Head of caudate nucleus (tissue), 42 donors: ENCODE measurements at regions of chr20 and their contacts with region 1.

Region 1: GRCh38 chr20:11274141-11274594 is 600.4 kb upstream of the JAG1 start:
- DNase-seq: peak in 33 of 42 donors; percentile 13 to 87 (median 55)

Region 2: DNA sequence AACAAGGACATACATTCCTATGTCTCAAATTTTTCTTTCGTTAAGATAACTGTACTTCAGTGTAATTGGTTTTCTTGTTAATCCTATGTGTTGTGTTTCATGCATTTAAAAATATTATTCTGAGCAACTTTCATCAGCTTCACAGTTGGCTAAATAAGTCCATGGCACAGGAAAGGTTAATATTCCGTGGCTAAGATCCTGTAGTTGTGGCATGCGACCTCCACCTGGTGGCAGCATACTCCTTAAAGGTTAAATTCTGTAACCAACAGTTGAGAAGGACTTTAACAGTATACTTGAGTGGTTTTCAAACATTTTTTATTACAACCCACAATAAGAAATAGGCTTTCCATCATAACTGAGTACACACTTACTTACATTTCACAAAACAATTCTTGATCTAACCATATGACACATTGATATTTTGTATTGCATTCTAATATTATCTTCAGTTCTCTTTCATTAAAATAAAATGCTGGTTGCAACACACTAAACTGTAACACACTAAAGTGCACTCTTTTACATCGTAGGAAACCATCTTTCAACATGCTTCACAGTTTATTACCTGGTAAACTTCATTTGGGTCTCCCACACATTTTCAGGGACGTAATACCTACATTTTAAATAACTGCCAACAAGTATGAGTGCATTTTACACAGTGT is 720.7 kb before region 1 on chr20:
- intact Hi-C with region 1: loop called (anchors 5 kb)
- DNase-seq: peak; percentile 20 to 85 (median 64)

Region 3: DNA sequence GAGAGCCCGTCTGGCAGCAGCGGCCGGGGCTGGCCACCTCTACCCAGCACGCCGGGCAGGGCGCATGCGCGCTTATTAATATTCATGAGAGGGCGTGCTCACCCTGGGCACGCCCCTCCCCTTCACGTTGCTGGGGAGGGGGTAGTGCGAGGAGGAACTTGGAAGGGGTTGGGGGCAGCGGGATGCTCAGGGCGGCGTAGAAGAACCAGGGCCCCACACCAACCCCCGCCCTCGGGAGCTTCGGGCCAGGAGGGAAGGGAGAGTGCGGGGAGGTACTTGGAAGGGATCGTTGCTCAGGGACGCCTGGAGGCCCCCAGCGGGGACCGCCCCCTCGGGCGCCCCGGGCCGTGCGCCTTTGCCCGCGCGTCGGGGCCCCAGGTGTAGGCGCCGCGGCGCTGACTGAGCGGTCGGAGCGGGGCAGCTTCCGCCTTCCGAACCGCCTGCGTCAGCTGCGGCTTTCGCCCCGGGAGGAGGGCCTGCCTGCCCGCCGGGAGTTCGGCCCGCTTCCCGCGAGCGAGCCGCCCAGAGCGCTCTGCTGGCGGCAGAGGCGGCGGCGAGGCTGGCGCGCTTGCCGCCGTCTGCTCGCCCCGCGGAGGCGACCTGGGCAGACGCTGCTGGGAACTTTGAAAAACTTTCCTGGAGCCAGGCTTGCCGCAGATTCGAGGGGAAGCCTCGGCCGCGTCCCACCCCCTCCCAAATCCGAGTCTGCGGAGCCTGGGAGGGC is 600.0 kb before region 1 on chr20 and contains the start of gene JAG1:
- intact Hi-C with region 1: loop called (anchors 10 kb)
- DNase-seq: peak; percentile 84 to 97 (median 93)

Region 4: DNA sequence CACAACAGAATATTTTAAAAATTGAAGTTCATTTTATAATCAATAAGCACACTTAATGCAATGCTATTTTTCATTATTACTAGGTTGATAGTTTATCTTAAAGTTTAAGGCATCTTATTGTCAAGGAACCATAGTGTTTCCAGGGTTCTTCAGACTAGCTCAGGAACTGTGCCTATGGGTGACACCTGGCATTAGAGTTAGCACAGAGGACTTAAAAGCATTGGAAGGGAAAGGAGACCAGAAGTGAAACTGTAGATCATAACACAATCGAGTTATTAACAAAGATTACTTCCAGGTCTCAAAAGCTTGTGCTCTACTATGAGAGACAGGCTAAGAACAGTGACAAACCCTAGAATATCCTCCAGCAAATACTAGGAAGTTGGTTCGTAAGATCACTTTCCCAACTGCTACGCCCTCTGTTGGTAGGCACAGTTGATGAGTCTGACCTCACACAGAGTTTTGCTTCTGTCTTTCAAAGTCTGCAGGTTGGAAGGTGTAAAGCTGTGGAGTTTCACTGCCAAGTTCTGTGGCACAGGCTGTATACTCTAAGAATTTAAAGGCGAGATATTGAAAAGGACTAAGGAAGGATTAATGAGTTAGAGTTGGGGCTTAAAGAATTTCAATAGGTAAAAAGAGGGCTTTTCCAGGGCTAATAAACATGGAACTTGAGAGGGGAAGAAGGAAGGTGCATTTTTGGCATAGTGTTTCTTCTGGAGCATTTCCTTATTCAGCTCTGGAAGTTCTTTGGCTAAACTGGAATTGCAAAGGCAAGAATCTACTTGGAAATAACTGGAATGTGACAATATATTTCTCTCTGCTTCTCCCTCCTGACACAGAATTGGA is 69.0 kb before region 1 on chr20:
- intact Hi-C with region 1: no loop called
- DNase-seq: peak in 37 of 42 donors; percentile 5 to 76 (median 40)

Region 5: GRCh38 chr20:11323816-11324215 is 49.6 kb after region 1 on chr20:
- intact Hi-C with region 1: no loop called
- DNase-seq: no peak